Heart left ventricle (tissue), 16 donors: ENCODE measurements at regions of chr2 and their contacts with region 1.

Region 1: DNA sequence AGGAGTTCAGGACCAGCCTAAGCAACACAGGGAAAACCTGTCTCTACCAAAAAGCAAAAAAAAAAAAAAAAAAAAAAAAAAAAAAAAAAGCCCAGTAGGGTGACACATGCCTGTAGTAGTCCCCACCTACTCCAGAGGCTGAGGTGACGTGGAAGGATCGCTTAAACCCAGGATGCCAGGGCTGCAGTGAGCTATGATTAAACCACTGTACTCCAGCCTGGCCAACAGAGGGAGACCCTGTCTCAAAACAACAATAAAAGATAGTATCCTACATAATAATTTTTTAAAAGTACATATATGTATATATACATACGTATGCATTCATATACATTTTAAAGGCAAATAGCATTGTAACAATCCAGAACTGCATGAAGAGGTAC is 51.7 kb downstream of the SOS1 start:
- DNase-seq: no peak
- ATAC-seq: no peak
- H3K4me3 ChIP-seq: no peak overlapping the region
- H3K27ac ChIP-seq: no peak overlapping the region
- H3K4me1 ChIP-seq: peaks cover 0 to 13% (median 0%) of the 10 kb centered on the region in 12 donors
- H3K27me3 ChIP-seq: no peaks in the 10 kb centered on the region
- CTCF ChIP-seq: peak in 1 of 12 donors; percentile 16
- POLR2A ChIP-seq: no peak

Region 2: DNA sequence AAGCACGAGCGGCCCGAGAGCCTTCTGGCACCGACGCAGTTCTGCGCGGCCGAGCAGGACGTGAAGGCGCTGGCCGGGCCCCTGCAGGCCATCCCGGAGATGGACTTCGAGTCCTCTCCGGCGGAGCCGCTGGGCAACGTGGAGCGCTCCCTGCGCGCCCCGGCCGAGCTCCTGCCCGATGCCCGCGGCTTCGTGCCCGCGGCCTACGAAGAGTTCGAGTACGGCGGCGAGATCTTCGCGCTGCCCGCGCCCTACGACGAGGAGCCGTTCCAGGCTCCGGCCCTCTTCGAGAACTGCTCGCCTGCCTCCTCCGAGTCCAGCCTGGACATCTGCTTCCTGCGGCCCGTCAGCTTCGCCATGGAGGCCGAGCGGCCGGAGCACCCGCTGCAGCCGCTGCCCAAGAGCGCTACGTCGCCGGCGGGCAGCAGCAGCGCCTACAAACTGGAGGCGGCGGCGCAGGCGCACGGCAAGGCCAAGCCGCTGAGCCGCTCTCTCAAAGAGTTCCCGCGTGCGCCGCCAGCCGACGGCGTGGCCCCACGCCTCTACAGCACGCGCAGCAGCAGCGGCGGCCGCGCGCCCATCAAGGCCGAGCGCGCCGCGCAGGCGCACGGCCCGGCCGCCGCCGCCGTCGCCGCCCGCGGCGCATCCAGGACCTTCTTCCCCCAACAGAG is 109.1 kb before region 1 on chr2:
- intact Hi-C with region 1: loop called in 1 of 10 experiments (anchors 10 kb)
- DNase-seq: peak; percentile 81 to 92 (median 82)
- ATAC-seq: peak; percentile 90 to 98 (median 97)
- H3K4me3 ChIP-seq: peak overlapping the region; percentile 2 to 66 (median 54)
- H3K27ac ChIP-seq: peak overlapping the region in 4 of 12 donors; percentile 24 to 55 (median 34)
- H3K4me1 ChIP-seq: peaks cover 0 to 14% (median 7%) of the 10 kb centered on the region in 12 donors
- H3K27me3 ChIP-seq: no peaks in the 10 kb centered on the region
- CTCF ChIP-seq: peak in 5 of 12 donors; percentile 6 to 33 (median 18)
- POLR2A ChIP-seq: no peak

Region 3: DNA sequence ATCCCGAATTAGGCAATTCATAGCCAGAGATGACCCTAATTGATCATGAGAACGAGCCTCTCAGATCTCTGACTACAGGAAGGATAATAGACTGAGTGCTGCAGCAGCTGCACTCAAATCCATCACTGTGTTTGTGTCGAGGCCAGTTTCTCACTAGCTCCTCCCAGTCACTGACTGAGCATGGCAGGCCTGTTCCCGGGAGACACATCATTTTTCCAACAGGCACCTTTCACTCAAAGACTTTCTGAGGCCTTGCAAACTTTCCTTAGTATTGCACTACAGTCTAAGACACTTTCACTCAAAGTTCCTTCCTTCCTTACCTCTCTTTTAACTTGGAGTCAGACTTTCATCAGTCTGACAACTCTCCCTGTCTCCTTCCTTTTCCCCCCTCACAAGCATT is 38.0 kb after region 1 on chr2:
- intact Hi-C with region 1: loop called in 5 of 10 experiments (anchors 5 to 10 kb)
- DNase-seq: no peak
- ATAC-seq: peak in 3 of 4 donors; percentile 32 to 68 (median 50)
- H3K4me3 ChIP-seq: no peak overlapping the region
- H3K27ac ChIP-seq: no peak overlapping the region
- H3K4me1 ChIP-seq: peaks cover 0 to 17% (median 6%) of the 10 kb centered on the region in 12 donors
- H3K27me3 ChIP-seq: no peaks in the 10 kb centered on the region
- CTCF ChIP-seq: no peak
- POLR2A ChIP-seq: no peak

Region 4: GRCh38 chr2:39114771-39115170 is 45.6 kb after region 1 on chr2:
- intact Hi-C with region 1: loop called in 8 of 10 experiments (anchors 5 to 10 kb)
- DNase-seq: no peak
- ATAC-seq: no peak
- H3K4me3 ChIP-seq: no peak overlapping the region
- H3K27ac ChIP-seq: no peak overlapping the region
- H3K4me1 ChIP-seq: peaks cover 0 to 49% (median 22%) of the 10 kb centered on the region in 12 donors
- H3K27me3 ChIP-seq: no peaks in the 10 kb centered on the region
- CTCF ChIP-seq: no peak
- POLR2A ChIP-seq: no peak

Region 5: GRCh38 chr2:39124000-39124745 is 55.0 kb after region 1 on chr2:
- intact Hi-C with region 1: loop called in 4 of 10 experiments (anchors 5 to 10 kb)
- DNase-seq: peak; percentile 95 to 98 (median 98)
- ATAC-seq: peak; percentile 84 to 94 (median 93)
- H3K4me3 ChIP-seq: peak overlapping the region; percentile 37 to 94 (median 76)
- H3K27ac ChIP-seq: peak overlapping the region; percentile 82 to 96 (median 92)
- H3K4me1 ChIP-seq: peaks cover 0 to 50% (median 18%) of the 10 kb centered on the region in 12 donors
- H3K27me3 ChIP-seq: no peaks in the 10 kb centered on the region
- CTCF ChIP-seq: peak; percentile 44 to 75 (median 66)
- POLR2A ChIP-seq: peak in 1 of 2 donors; percentile 88